Aorta (tissue), 5 donors: ENCODE measurements at regions of chr12 and their contacts with region 1.

Region 1: DNA sequence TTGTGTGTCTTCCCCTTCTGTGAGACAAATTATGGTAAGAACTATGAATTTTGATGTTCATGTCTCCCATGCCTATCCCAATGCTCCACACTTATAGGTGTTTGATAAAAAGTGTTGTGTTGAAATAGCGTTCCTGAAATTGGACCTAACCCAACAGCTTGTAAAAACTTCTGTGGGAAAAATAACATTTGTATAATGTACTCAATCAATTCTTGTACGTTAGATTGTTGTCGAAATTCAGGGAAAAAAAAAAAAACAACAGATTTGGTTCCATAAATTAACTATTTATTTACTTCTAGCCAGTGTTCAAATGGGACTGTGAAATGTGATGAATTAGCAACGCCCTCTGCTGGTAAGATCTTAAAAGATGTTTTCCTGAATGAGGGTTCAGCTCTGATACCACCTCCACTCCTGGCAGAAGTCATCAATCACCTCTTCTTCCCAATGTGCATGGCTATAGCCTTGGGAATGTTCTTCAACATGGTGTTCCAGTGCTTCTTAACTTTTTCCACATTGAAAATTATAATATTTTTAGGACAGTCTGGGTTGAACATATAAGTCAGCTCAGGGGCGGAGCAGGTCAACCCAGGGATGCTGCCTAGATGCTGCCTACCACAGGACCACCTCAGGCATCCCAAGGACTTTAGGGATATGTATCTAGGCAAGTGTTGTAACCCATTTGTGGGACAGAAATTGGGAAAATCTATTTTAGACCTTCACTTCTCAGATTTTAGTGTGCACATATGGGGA is 170.6 kb downstream of the OTOGL start:
- DNase-seq: no peak
- ATAC-seq: peak; percentile 72
- H3K4me3 ChIP-seq: peak overlapping the region in 1 of 2 donors; percentile 14
- H3K27ac ChIP-seq: no peak overlapping the region
- H3K4me1 ChIP-seq: no peaks in the 10 kb centered on the region
- H3K27me3 ChIP-seq: no peaks in the 10 kb centered on the region

Region 2: DNA sequence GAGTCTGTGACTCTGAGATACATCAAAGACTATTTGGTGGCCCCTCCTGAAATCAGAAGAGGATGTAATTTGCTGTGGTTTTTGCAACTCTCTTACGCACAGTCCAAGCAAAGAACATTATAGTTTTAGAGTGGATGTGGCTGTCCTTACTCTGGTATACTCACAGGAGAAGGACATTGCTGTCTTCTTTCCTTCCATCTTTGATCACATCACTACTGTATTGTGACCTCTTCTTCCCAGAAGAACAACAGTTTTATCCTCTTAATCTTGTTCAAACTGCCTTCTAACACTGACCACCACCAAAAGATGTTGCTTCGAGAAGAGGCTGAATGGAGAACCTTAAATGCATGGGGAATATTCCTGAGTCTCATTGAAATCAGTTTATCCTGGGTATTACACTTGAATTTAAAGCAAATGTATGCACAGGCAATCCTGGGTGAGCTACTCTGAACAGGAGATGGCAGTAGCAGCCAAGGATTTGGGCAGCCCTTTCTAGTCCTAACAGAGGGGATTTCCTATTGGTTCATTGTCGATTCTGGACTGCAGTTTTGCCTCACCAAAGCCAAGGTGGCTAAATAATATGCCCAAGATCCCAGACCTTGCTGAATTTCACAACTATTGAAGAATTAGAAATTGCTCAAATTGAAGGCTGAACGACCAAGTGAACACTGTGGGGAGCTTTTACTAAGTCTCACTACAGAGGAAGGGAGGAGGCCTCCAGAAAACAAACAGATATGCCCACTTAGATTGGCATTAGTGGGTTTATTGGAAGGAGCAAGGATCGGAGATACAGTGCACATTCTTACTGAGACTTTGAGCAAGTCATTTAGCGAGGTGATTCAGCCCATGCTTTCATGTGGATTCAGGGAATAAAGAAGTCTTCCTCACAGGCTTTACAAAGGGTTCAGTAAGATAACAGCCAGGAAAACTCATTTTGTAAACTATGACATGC is 862.0 kb before region 1 on chr12:
- intact Hi-C with region 1: loop called (anchors 5 to 10 kb)
- DNase-seq: peak in 1 of 2 donors; percentile 50
- ATAC-seq: peak; percentile 86
- H3K4me3 ChIP-seq: no peak overlapping the region
- H3K27ac ChIP-seq: peak overlapping the region; percentile 57 to 90
- H3K4me1 ChIP-seq: peaks cover 2 to 3% of the 10 kb centered on the region in 2 donors
- H3K27me3 ChIP-seq: no peaks in the 10 kb centered on the region

Region 3: DNA sequence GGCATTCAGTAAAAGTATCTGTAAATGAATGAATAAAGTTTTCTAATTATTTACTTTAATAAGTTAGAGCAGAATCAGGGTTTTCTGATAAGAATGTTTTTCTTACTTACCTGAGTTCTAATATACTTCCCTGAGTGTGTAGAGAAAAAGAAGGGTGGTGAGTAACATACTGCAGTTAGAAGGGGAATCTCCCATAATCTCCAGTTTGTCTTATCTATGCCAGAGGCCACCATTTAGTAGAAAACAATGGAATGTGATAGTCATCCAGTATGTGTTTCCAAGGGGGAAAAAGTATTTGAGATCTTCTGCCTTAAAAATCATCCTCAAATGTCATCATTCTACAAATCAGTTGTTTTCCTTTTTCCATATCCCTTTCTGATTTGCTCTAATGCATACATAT is 522.7 kb before region 1 on chr12:
- intact Hi-C with region 1: loop called in 1 of 2 experiments (anchors 10 kb)
- DNase-seq: no peak
- ATAC-seq: no peak
- H3K4me3 ChIP-seq: no peak overlapping the region
- H3K27ac ChIP-seq: no peak overlapping the region
- H3K4me1 ChIP-seq: no peaks in the 10 kb centered on the region
- H3K27me3 ChIP-seq: no peaks in the 10 kb centered on the region

Region 4: GRCh38 chr12:80195074-80195726 is 74.8 kb before region 1 on chr12:
- intact Hi-C with region 1: loop called (anchors 2 to 5 kb)
- DNase-seq: no peak
- ATAC-seq: no peak
- H3K4me3 ChIP-seq: no peak overlapping the region
- H3K27ac ChIP-seq: no peak overlapping the region
- H3K4me1 ChIP-seq: no peaks in the 10 kb centered on the region
- H3K27me3 ChIP-seq: no peaks in the 10 kb centered on the region